CD4-positive, alpha-beta T cell (primary cell): ENCODE measurements at regions of chr7 and their contacts with region 1.

Region 1: DNA sequence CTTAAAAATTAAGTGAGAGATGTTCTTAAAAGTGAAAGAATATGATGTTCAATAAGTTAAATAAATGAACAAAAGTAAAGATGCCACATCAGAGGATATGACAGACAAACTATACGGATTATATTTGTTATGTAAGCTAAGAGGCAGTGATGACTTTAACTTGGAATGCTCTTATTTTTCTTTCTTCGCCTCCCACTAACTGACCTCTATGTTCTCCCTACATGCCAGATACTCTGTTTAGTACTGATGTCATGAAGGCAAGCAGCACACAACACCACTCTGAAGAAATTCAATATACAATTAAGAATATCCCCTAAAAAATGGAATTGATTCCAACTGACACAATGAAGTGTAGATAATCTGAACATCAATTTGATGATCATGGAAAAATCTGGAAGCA is 223.4 kb downstream of the DOCK4 start:
- DNase-seq: no peak
- ATAC-seq: no peak
- H3K4me3 ChIP-seq: no peak overlapping the region
- H3K4me3 Mint-ChIP-seq: no peak overlapping the region
- H3K27ac ChIP-seq: no peak overlapping the region
- H3K27ac Mint-ChIP-seq: no peak overlapping the region
- H3K4me1 ChIP-seq: no peaks in the 10 kb centered on the region
- H3K4me1 Mint-ChIP-seq: no peaks in the 10 kb centered on the region
- H3K27me3 ChIP-seq: no peaks in the 10 kb centered on the region
- H3K27me3 Mint-ChIP-seq: no peaks in the 10 kb centered on the region
- CTCF ChIP-seq: no peak

Region 2: DNA sequence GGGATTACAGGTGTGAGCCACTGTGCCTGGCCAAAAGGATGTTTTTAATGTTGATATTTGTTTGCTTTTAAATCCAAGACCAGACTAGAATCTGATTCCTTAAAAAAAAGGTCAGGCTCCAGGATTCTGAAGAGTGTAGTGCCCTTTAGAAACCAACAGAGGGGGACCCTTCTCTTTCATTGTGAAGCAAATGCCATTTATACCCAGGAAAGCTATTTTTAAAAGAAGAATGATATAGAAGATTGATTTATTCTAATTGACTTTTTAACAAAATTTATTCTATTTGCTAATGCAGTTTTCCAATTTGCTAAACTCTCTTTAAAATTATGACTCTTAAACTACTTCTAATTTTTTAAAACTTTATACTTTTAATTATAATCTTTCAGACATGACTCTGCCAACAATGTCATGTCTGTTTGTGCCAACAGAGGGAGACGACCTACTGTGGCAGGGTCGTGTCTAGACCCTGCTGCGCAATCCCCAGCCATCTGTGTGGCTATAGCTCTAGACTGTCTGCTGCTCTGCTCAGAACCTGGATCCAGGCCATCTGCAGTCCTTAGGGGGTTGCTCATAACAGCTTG is 219.5 kb before region 1 on chr7:
- CTCF ChIA-PET with region 1: no interaction called
- POLR2A ChIA-PET with region 1: no interaction called
- intact Hi-C with region 1: no loop called
- DNase-seq: peak in 2 of 14 experiments; percentile 3 to 13
- ATAC-seq: no peak
- H3K4me3 ChIP-seq: no peak overlapping the region
- H3K4me3 Mint-ChIP-seq: no peak overlapping the region
- H3K27ac ChIP-seq: no peak overlapping the region
- H3K27ac Mint-ChIP-seq: no peak overlapping the region
- H3K4me1 ChIP-seq: no peaks in the 10 kb centered on the region
- H3K4me1 Mint-ChIP-seq: no peaks in the 10 kb centered on the region
- H3K27me3 ChIP-seq: no peaks in the 10 kb centered on the region
- H3K27me3 Mint-ChIP-seq: no peaks in the 10 kb centered on the region
- CTCF ChIP-seq: peak; percentile 15

Region 3: GRCh38 chr7:111953611-111954010 is 29.2 kb before region 1 on chr7:
- CTCF ChIA-PET with region 1: no interaction called
- POLR2A ChIA-PET with region 1: no interaction called
- intact Hi-C with region 1: loop called in 1 of 2 experiments (anchors 1 kb)
- DNase-seq: peak in 1 of 14 experiments; percentile 3
- ATAC-seq: no peak
- H3K4me3 ChIP-seq: no peak overlapping the region
- H3K4me3 Mint-ChIP-seq: no peak overlapping the region
- H3K27ac ChIP-seq: no peak overlapping the region
- H3K27ac Mint-ChIP-seq: no peak overlapping the region
- H3K4me1 ChIP-seq: no peaks in the 10 kb centered on the region
- H3K4me1 Mint-ChIP-seq: no peaks in the 10 kb centered on the region
- H3K27me3 ChIP-seq: no peaks in the 10 kb centered on the region
- H3K27me3 Mint-ChIP-seq: no peaks in the 10 kb centered on the region
- CTCF ChIP-seq: no peak